ENCODE measurements at regions of chr4 and their contacts with region 1.

Region 1: DNA sequence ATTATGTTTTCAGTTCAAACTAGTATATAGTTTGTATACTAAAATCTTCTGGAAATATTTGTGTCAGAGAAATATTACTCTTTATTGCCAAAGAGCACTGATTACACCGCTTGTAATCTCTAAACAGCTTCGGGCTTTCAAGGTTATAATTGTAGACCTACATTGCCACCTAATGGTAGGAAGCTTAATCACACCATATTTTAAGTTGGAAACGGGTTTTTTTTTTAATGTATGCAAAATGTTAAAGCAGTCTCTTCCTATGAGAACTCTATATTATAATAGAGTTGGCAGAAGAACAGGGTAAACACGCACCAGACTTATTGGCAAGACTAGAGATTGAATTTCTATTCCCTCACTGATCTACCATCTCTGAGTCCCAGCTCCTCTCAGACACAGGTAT is 19.5 kb upstream of the NFXL1 start:
- DNase-seq: no peak
- H3K4me3 ChIP-seq: no peak overlapping the region
- CTCF ChIP-seq: no peak
- POLR2A ChIP-seq: no peak

Region 2: GRCh38 chr4:47669946-47670345 is 263.9 kb before region 1 on chr4:
- intact Hi-C with region 1: loop called (anchors 10 kb)
- DNase-seq: no peak
- H3K4me3 ChIP-seq: no peak overlapping the region
- CTCF ChIP-seq: no peak
- POLR2A ChIP-seq: no peak

Region 3: DNA sequence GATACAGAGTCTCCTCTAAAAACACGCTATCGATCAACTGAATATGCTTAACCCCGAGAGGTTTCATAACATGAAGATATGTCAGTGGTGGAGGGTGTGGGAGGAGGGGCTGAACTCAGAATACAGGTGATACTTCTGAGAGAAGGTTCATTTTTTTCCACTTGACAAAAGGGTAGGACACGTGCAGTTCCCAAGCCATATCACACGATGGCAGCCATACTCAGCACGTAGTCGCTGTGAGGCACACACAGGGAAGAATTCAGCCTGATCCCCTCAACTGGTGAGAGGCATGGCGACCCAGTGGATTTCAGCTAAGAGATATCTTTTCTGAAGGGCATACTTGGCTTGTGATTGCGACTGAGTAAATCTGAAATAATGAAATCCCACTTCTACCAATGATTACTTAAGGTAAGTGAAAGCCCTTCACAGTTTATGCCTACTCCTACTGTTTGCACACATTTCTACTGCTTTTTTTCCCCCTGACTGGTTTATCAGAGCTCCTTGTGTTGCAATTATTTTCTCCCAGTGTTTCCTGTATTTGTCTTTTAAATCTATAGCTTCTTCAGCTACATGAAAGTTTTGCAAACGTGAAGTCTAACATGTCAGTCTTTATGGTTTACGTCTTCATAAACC is 229.0 kb before region 1 on chr4:
- intact Hi-C with region 1: no loop called
- DNase-seq: no peak
- H3K4me3 ChIP-seq: no peak overlapping the region
- CTCF ChIP-seq: no peak
- POLR2A ChIP-seq: no peak

Region 4: DNA sequence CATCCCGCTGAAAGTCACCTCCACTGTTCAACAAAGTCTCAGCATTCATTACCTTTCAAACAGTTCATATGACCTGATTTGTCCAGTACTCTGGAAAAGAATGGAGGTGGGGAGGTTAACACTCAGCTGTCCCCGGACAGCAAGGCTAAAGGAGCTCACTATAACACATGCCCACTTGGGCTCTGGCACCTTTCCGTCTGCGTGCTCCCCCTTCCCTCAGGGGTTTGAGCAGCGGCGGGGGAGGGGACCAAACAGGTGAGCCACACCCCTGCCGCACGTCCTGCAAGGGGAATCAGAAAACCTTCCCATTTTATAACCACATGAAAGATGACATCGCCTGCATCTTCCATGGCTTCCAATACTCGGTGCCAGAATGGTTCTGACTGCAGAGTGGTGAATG is 20.4 kb after region 1 on chr4:
- intact Hi-C with region 1: no loop called
- DNase-seq: no peak
- H3K4me3 ChIP-seq: no peak overlapping the region
- CTCF ChIP-seq: no peak
- POLR2A ChIP-seq: no peak

Region 5: DNA sequence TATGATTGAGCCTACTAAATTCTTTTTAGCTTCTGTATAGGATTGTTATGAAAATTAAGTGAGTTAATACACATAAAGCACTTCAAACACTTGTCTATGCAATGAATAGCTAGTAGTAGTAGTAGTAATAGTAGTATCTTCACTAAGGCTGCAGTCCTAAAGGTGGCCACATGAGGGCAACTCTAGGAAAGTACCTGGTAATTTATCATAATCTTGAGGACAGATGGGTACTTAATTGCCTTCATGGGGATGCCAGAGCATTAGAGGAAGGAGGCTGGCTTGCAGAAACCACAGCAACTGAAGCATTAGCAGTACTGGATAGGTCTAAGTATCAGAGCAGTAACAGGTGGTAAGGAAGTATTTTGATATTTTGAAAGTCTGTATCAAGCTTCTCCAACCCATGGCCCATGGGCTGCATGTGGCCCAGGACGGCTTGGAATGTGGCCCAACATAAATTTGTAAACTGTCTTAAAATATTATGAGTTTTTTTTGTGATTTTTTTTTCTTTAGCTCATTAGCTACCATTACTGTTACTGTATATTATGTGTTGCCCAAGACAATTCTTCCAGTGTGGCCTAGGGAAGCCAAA is 100.1 kb after region 1 on chr4:
- intact Hi-C with region 1: no loop called
- DNase-seq: no peak
- H3K4me3 ChIP-seq: no peak overlapping the region
- CTCF ChIP-seq: no peak
- POLR2A ChIP-seq: no peak

Region 6: GRCh38 chr4:48093949-48094550 is 160.2 kb after region 1 on chr4:
- intact Hi-C with region 1: loop called (anchors 10 kb)
- DNase-seq: no peak
- H3K4me3 ChIP-seq: no peak overlapping the region
- CTCF ChIP-seq: no peak
- POLR2A ChIP-seq: no peak